ENCODE measurements at regions of chr4 and their contacts with region 1.

Region 1: DNA sequence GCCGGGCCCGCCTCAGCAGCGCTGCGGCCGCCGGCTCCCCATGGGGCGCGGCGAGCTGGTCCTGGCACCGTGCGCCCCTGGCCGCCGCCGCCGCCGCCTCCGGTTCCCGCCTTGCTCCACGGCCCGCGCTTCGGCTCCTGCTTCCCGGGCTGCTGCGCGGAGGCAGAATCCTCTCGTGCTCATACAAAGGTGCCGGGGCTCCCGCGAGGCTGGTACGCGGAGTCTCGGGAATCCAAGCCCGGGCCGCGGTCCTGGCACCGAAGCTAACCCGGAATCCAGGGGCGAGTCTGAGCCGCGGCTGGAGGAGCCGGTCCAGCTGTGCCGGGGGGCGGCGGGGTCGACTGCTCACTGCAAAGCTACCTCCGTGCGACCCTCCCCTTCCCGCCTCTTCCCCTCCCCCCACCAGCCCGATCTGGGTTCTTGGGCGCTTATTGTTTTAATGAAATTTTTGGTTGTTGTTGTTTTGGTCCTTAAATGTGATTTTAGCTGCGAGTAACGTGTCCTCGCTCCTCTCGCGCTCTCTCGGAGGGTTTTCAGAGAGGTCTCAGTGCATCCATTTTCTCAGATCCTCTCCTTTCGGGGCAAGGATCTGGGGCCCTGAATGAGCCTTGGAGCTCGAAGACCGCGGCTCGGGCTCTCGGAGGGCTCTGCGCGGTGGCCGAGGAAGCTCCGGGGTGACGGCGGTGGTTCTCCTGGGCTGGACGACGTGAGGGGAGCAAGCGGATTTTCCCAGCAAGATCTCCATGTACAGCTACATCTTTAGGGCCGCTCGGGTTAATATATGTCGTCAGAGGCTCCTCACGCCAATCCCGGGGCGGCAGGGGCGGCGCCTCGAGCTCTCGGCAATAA is at the start of gene HAND2:
- DNase-seq: peak in 2 of 3 donors; percentile 48 to 54
- ATAC-seq: peak; percentile 61
- H3K4me3 ChIP-seq: peak within 1 kb of the TSS; percentile 14
- H3K4me1 ChIP-seq: peaks cover 9% of the 10 kb centered on the region
- CTCF ChIP-seq: no peak
- total RNA-seq, gene HAND2: 3.3 to 175 (median 11.8) TPM

Region 2: DNA sequence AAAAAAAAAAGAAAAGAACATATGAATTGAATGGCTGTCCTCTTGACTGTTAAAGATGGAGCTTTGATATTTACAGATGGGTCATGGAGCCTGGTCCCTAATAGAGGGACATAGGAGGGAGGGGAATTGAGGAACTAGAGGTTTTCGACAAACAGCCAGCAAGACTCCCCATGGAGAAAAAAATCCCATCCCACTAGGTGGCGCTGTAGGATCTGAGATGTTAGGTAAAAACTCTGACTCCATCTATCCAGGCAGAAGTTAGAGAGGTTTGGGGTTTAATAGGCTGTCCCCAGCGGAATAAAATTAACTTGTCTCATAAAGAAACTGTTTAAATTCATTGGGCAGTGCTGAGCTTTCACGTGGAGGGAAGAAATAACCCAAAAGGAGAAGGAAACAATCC is 241.4 kb before region 1 on chr4:
- intact Hi-C with region 1: no loop called
- DNase-seq: peak in 1 of 3 donors; percentile 87
- ATAC-seq: peak; percentile 56
- H3K4me3 ChIP-seq: no peak overlapping the region
- H3K4me1 ChIP-seq: peaks cover 2% of the 10 kb centered on the region
- CTCF ChIP-seq: no peak

Region 3: GRCh38 chr4:174154215-174154854 is 624.6 kb after region 1 on chr4:
- intact Hi-C with region 1: loop called in 1 of 2 experiments (anchors 5 kb)
- DNase-seq: peak in 1 of 3 donors; percentile 4
- ATAC-seq: peak; percentile 25
- H3K4me3 ChIP-seq: no peak overlapping the region
- H3K4me1 ChIP-seq: no peaks in the 10 kb centered on the region
- CTCF ChIP-seq: no peak